ENCODE measurements at regions of chr17 and their contacts with region 1.

Region 1: GRCh38 chr17:8745586-8746500 is 1.2 kb upstream of the CCDC42 start:
- DNase-seq: peak; percentile 48
- H3K4me3 Mint-ChIP-seq: peak overlapping the region; percentile 73
- H3K27ac Mint-ChIP-seq: no peak overlapping the region
- H3K4me1 Mint-ChIP-seq: no peaks in the 10 kb centered on the region
- H3K27me3 Mint-ChIP-seq: no peaks in the 10 kb centered on the region
- CTCF ChIP-seq: peak; percentile 98

Region 2: GRCh38 chr17:8383143-8383822 is 362.6 kb before region 1 on chr17 and contains the start of gene RPL26:
- CTCF ChIA-PET with region 1: interaction called, 4 read pairs
- POLR2A ChIA-PET with region 1: interaction called, 7 read pairs
- intact Hi-C with region 1: loop called (anchors 1 kb)
- DNase-seq: peak; percentile 99
- H3K4me3 Mint-ChIP-seq: peak within 1 kb of the TSS; percentile 97
- H3K27ac Mint-ChIP-seq: peak within 1 kb of the TSS; percentile 100
- H3K4me1 Mint-ChIP-seq: peaks cover 21% of the 10 kb centered on the region
- H3K27me3 Mint-ChIP-seq: no peaks in the 10 kb centered on the region
- CTCF ChIP-seq: peak; percentile 81
- total RNA-seq, gene RPL26: 3,179 and 3,524 TPM in 2 replicates

Region 3: DNA sequence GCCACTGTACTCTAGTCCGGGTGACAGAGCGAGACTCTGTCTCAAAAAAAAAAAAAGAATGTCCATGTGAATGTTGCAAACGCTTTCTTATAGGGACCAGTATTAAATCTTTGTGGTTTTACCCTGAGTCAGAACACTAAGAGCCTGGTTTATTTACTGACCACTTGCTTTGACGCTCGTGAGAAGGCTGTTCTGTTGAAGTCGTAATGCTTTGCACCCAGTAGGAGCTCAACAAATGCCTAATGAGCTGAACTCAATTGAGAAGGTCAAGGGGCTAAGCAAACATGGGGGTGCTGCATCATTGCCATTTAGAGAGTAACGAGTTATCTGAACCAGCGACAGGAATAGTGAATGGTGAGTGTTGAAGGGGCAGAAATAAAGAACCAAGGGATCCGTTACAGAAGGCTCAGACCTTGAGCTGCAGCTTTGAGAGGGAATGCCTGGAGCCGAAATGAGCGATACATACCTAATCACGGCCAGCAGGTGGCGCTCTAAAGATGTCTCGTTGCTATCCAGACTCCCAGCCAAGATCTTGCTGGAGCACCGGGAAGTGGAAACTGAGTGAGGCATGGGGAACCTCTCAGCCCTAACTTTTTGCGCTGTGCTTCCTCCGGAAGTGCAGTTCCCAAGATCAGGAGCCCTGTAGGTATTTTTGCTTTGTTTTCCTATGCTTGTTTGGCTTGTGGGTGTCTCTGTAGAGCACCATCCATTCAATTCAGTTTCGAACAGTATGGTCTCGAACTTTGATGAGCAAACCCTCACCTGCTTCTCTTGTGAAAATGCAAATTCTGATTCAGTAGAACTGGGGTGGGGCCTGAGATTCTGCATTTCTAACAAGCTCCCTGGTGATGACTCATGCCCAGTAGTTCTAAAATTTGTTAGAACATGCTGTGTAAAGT is 335.6 kb before region 1 on chr17:
- CTCF ChIA-PET with region 1: interaction called, 35 read pairs
- POLR2A ChIA-PET with region 1: no interaction called
- intact Hi-C with region 1: no loop called
- DNase-seq: peak; percentile 93
- H3K4me3 Mint-ChIP-seq: peak overlapping the region; percentile 60
- H3K27ac Mint-ChIP-seq: no peak overlapping the region
- H3K4me1 Mint-ChIP-seq: peaks cover 14% of the 10 kb centered on the region
- H3K27me3 Mint-ChIP-seq: no peaks in the 10 kb centered on the region
- CTCF ChIP-seq: peak; percentile 76

Region 4: GRCh38 chr17:8488901-8489300 is 256.9 kb before region 1 on chr17:
- CTCF ChIA-PET with region 1: interaction called, 4 read pairs
- POLR2A ChIA-PET with region 1: no interaction called
- intact Hi-C with region 1: loop called (anchors 1 kb)
- DNase-seq: peak; percentile 80
- H3K4me3 Mint-ChIP-seq: no peak overlapping the region
- H3K27ac Mint-ChIP-seq: peak overlapping the region; percentile 77
- H3K4me1 Mint-ChIP-seq: peaks cover 7% of the 10 kb centered on the region
- H3K27me3 Mint-ChIP-seq: no peaks in the 10 kb centered on the region
- CTCF ChIP-seq: no peak

Region 5: DNA sequence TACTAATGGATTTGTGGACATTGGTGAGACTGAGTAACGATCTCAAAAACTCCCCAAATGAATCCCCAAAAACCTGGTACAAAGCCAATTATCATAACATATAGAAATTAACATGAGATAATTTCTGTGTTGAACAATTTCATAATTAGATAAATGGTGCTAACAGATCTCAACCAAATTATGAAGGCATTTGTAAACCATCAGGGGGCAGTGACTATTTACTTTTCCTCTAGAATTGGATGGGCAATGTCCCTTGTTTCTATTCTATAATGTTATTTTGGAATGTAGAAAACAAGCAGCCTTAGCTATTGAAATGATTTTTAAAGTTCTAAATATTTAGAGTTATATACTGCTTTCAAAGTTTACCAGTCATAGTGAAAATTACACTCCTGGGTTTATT is 173.1 kb before region 1 on chr17:
- CTCF ChIA-PET with region 1: interaction called, 8 read pairs
- POLR2A ChIA-PET with region 1: no interaction called
- intact Hi-C with region 1: loop called (anchors 2 kb)
- DNase-seq: peak; percentile 8
- H3K4me3 Mint-ChIP-seq: no peak overlapping the region
- H3K27ac Mint-ChIP-seq: no peak overlapping the region
- H3K4me1 Mint-ChIP-seq: no peaks in the 10 kb centered on the region
- H3K27me3 Mint-ChIP-seq: no peaks in the 10 kb centered on the region
- CTCF ChIP-seq: peak; percentile 15

Region 6: DNA sequence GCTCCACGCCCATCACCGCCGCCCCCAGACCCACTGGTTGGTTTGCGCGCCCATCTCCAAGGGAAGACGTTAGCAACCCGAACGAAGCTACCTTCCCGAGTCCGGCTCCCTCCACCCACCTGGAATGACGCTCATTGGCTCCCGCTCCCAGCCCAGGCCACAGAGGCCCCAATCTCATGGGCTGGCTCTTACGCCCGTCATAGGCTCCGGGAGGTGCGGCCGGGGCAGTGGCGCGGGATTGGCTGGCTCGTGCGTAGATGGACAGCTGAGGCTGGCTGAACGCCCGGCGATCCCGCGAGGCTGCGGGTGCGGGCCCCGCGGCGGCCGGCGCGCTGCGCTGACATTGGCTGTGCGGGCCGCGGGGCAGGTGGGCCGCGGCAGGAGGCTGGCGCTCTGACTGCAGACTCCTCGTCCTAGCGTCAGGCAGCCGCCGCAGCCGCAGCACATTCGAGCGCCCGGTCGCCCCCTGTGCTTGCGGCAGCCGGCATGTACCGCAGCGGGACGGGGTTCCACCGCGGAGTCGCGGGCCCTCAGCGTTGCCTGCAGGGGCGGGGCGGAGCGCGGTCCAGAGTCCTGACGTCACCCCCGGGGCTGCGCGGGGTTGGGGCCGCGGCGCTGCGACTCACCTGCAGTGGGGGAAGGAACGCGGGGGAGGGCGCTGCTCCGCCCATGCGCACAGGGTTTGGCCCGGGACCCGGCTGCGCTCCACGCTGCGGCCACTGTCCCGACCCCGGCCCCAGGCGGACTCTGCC is 114.9 kb before region 1 on chr17:
- CTCF ChIA-PET with region 1: no interaction called
- POLR2A ChIA-PET with region 1: interaction called, 4 read pairs
- intact Hi-C with region 1: loop called (anchors 5 kb)
- DNase-seq: peak; percentile 100
- H3K4me3 Mint-ChIP-seq: peak overlapping the region; percentile 97
- H3K27ac Mint-ChIP-seq: peak overlapping the region; percentile 92
- H3K4me1 Mint-ChIP-seq: peaks cover 16% of the 10 kb centered on the region
- H3K27me3 Mint-ChIP-seq: no peaks in the 10 kb centered on the region
- CTCF ChIP-seq: peak; percentile 18

Region 7: DNA sequence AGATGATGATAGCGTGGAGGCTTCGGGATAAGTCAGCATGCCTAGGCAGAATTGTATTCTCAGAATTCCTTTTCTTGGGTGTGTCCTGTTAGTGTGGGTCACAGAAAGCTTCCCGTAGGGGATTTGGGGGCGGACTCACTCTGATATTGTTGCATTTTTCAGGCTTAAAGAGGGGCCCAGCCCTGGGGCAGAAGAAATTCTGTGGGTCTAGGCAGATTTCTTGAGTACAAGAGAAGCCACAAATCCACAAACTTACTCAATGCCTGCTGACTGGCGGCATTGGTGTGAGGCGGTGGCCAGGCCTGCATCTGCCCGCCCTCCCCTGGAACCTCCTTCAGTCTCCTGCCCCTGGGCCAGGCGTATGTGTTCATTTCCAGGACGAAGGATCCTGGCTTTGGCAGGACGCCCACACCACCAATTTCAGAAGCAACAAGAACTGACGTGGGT is 18.8 kb before region 1 on chr17:
- CTCF ChIA-PET with region 1: interaction called, 11 read pairs
- POLR2A ChIA-PET with region 1: no interaction called
- intact Hi-C with region 1: no loop called
- DNase-seq: peak; percentile 87
- H3K4me3 Mint-ChIP-seq: no peak overlapping the region
- H3K27ac Mint-ChIP-seq: peak overlapping the region; percentile 71
- H3K4me1 Mint-ChIP-seq: peaks cover 13% of the 10 kb centered on the region
- H3K27me3 Mint-ChIP-seq: no peaks in the 10 kb centered on the region
- CTCF ChIP-seq: no peak

Measured in MCF 10A (cell line).